Activated CD4-positive, alpha-beta memory T cell treated with anti-CD3 and anti-CD28 coated beads for 36 hours (primary cell): ENCODE measurements at regions of chr9 and their contacts with region 1.

Region 1: DNA sequence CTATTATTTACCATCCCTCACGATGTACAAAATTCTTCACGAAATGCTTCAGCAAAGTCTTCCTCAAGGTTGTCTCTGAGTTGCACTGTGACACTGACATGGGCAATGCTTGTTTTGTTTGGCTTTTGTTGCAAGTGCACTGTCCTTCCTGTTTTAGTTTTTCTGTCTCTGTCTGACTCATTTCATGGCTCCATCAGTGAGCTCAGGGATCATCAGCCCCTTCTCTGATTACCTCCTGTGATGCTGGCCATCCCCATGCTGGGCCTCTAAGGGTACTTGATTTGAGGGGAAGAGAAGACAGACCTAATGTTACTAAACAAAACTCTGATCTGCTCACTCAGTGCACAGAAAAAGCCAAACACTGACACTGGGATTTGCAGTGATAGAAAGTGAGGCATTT is 37.6 kb upstream of the STX17 start:
- DNase-seq: no peak
- H3K4me3 Mint-ChIP-seq: no peak overlapping the region
- H3K27ac Mint-ChIP-seq: no peak overlapping the region
- H3K4me1 Mint-ChIP-seq: peaks cover 21% of the 10 kb centered on the region
- H3K27me3 Mint-ChIP-seq: no peaks in the 10 kb centered on the region

Region 2: DNA sequence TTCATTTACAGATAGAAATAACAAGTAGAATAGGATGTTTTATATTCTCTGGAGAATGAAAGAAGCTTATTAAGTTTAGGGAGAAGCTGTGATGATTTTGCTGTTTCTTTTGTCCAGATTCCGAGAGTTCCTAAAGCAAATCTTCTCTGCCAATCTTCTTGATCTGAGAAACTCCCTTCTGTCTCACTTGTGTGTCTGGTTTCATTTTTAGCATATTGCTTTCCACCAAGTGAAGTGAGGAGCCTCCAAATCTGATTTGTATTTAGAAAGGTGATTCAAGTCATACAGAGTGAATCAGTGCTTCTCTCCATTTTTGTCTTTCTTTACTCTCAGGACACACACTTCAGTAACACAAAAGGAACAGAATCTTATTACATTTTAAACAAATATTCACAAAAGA is 86.0 kb after region 1 on chr9:
- CTCF ChIA-PET with region 1: no interaction called
- POLR2A ChIA-PET with region 1: no interaction called
- intact Hi-C with region 1: loop called (anchors 2 kb)
- DNase-seq: no peak
- H3K4me3 Mint-ChIP-seq: no peak overlapping the region
- H3K27ac Mint-ChIP-seq: peak overlapping the region; percentile 62
- H3K4me1 Mint-ChIP-seq: peaks cover 22% of the 10 kb centered on the region
- H3K27me3 Mint-ChIP-seq: no peaks in the 10 kb centered on the region